ENCODE measurements at regions of chr7 and their contacts with region 1.

Region 1: DNA sequence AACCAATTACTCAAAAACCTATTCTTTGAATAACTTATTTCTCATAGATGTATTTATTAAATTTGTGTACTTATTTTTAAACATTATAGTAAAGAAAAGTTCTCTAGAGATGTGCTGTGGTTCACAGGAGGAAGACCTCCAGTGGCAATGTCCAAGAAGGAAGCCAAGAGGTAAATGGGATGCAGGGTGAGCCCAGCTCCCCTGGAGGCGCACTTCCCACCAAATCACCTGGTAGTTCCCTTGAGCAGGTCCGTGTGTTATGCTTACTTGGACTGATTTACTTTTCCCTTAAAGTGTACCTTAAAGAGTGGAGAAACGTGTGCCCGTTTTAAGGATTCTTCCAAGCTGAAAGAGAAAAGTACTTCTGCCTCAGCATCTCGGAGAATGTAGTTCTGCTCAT is 55.3 kb downstream of the PAXIP1 start:
- DNase-seq: no peak
- H3K4me3 ChIP-seq: no peak overlapping the region
- H3K27ac ChIP-seq: no peak overlapping the region
- H3K4me1 ChIP-seq: no peaks in the 10 kb centered on the region
- H3K27me3 ChIP-seq: no peaks in the 10 kb centered on the region
- CTCF ChIP-seq: no peak
- POLR2A ChIP-seq: no peak

Region 2: GRCh38 chr7:154968336-154969001 is 20.9 kb after region 1 on chr7:
- intact Hi-C with region 1: loop called (anchors 1 kb)
- DNase-seq: no peak
- H3K4me3 ChIP-seq: no peak overlapping the region
- H3K27ac ChIP-seq: no peak overlapping the region
- H3K4me1 ChIP-seq: no peaks in the 10 kb centered on the region
- H3K27me3 ChIP-seq: no peaks in the 10 kb centered on the region
- CTCF ChIP-seq: no peak
- POLR2A ChIP-seq: no peak

Region 3: DNA sequence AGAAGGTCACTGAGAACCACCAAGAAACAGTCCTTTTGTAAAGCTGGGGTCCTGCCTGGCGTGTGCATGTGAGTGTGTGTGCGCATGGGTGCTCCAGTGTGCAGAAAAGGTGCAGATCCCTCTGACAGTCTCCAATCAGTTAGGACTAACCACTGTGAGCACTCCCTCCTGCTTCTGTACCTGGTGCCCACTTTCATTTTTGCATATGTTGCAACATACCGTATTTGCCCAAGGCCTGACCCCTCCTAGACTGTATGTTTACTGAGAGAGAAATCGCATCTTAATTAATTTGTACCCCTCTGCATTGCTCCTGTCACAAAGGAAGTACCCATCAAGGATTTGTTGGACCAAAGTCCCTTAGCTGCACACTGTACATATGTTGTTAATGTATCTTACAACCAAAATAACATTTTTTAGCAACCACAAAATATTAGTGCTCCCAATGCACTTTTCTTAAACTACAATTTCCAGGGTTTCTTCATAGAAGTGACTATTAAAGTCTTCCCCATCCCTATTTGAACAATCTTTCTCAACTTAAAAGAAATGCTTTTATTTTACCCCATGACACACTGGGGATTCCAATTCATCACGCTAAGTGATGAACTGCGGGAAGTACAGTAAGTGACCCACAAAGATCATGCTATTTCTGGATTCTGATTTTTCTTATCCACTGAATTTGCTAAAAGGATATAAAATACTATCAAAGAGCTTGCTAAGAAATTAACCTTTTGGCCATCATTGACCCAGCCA is 38.8 kb after region 1 on chr7:
- intact Hi-C with region 1: loop called (anchors 1 kb)
- DNase-seq: no peak
- H3K4me3 ChIP-seq: no peak overlapping the region
- H3K27ac ChIP-seq: no peak overlapping the region
- H3K4me1 ChIP-seq: no peaks in the 10 kb centered on the region
- H3K27me3 ChIP-seq: no peaks in the 10 kb centered on the region
- CTCF ChIP-seq: no peak
- POLR2A ChIP-seq: no peak